Left ventricle myocardium superior (tissue), 1 donor: ENCODE measurements at regions of chr6 and their contacts with region 1.

Region 1: DNA sequence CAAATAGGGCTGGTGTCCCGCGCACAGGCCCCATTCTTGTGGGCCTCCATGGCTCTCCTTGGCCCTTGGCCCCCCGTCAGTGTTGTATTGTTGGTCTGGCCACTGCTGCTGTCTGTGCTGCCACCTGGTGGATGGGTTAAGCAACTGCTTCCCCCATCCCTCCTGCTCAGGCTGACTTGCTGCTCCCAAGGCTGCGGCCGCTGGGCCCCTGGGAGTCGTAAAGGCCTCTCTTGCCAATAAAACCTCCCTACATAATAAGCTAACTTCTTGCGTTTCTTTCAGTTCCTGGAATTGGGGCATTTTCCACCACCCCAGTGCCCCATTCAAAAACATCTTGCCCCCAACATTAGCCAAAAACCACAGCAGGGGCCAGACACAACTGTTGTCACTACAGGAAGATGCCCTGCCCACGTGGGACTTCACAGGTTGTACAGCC is 27.1 kb downstream of the CD83 start:
- DNase-seq: peak; percentile 67
- ATAC-seq: peak; percentile 85

Region 2: GRCh38 chr6:13908955-13909381 is 235.7 kb before region 1 on chr6:
- intact Hi-C with region 1: loop called (anchors 10 kb)
- DNase-seq: no peak
- ATAC-seq: peak; percentile 57

Region 3: GRCh38 chr6:15770347-15771143 is 1625.8 kb after region 1 on chr6:
- intact Hi-C with region 1: no loop called
- DNase-seq: no peak
- ATAC-seq: no peak